Activated CD4-positive, alpha-beta memory T cell treated with anti-CD3 and anti-CD28 coated beads for 36 hours (primary cell): ENCODE measurements at regions of chr17 and their contacts with region 1.

Region 1: DNA sequence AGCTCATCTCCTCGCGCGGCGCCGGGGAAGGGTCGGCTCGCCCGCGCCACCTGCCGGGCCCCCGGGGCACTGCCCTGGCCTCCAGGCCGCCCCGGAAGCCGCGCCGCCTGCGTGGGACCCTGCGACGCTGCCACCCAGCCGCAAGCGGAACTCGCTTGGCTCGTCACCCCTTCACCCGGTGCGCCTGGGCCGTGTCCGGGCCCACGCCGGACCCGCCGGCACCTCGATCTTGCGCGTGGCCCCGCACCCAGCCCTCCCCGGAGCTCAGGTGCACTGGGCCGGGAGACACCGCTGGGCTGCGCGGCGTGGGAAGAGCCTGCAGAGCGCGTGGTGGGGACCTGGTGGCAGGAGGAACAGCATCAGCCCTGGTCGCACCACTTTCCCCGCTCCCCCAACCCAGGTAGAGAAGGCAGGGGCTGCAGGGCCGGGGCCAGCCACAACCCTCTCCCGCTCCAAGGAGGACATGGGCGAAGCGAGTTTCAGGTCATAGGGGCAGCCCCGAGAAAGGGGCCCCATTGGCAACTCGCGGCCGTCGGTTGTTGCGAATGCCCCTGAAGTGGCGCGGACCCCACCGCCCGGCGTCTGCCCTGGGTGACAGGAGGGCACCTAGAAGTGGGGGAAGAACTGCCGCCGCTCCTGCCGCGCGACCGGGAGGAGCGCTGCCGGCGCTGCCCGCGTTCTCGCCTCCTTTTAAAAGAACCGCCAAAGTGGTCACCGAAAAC is 363 bp upstream of the MIF4GD start:
- DNase-seq: peak; percentile 91
- H3K4me3 Mint-ChIP-seq: peak overlapping the region; percentile 75
- H3K27ac Mint-ChIP-seq: peak overlapping the region; percentile 63
- H3K4me1 Mint-ChIP-seq: peaks cover 31% of the 10 kb centered on the region
- H3K27me3 Mint-ChIP-seq: no peaks in the 10 kb centered on the region

Region 2: DNA sequence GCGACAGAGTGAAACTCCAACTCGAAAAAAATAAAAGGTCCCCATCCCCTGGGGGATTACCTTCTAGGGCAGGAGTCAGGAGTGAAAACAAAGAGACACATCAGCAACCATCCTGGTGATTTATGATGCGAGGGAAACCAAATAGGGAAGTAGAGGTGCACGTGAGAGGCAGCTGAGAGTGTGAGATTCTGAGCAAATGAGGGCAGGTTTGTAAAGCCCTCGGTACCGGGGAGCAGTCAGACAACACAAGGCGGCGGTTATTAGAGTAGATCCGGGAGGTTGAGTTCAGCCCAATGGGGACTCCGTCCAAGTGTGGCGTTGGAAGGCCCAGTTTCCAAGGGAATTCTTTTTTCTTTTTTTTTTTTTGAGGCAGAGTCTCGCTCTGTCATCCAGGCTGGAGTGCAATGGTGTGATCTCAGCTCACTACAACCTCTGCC is 169.0 kb before region 1 on chr17:
- CTCF ChIA-PET with region 1: no interaction called
- POLR2A ChIA-PET with region 1: no interaction called
- intact Hi-C with region 1: no loop called
- DNase-seq: no peak
- H3K4me3 Mint-ChIP-seq: no peak overlapping the region
- H3K27ac Mint-ChIP-seq: no peak overlapping the region
- H3K4me1 Mint-ChIP-seq: no peaks in the 10 kb centered on the region
- H3K27me3 Mint-ChIP-seq: no peaks in the 10 kb centered on the region

Region 3: GRCh38 chr17:75238684-75239191 is 32.7 kb before region 1 on chr17:
- CTCF ChIA-PET with region 1: interaction called, 60 read pairs
- POLR2A ChIA-PET with region 1: interaction called, 21 read pairs
- intact Hi-C with region 1: no loop called
- DNase-seq: peak; percentile 74
- H3K4me3 Mint-ChIP-seq: no peak overlapping the region
- H3K27ac Mint-ChIP-seq: peak overlapping the region; percentile 85
- H3K4me1 Mint-ChIP-seq: peaks cover 41% of the 10 kb centered on the region
- H3K27me3 Mint-ChIP-seq: no peaks in the 10 kb centered on the region

Region 4: GRCh38 chr17:75295201-75296158 is 24.1 kb after region 1 on chr17:
- CTCF ChIA-PET with region 1: interaction called, 56 read pairs
- POLR2A ChIA-PET with region 1: interaction called, 6 read pairs
- intact Hi-C with region 1: no loop called
- DNase-seq: peak; percentile 58
- H3K4me3 Mint-ChIP-seq: peak overlapping the region; percentile 37
- H3K27ac Mint-ChIP-seq: peak overlapping the region; percentile 99
- H3K4me1 Mint-ChIP-seq: peaks cover 35% of the 10 kb centered on the region
- H3K27me3 Mint-ChIP-seq: no peaks in the 10 kb centered on the region

Region 5: DNA sequence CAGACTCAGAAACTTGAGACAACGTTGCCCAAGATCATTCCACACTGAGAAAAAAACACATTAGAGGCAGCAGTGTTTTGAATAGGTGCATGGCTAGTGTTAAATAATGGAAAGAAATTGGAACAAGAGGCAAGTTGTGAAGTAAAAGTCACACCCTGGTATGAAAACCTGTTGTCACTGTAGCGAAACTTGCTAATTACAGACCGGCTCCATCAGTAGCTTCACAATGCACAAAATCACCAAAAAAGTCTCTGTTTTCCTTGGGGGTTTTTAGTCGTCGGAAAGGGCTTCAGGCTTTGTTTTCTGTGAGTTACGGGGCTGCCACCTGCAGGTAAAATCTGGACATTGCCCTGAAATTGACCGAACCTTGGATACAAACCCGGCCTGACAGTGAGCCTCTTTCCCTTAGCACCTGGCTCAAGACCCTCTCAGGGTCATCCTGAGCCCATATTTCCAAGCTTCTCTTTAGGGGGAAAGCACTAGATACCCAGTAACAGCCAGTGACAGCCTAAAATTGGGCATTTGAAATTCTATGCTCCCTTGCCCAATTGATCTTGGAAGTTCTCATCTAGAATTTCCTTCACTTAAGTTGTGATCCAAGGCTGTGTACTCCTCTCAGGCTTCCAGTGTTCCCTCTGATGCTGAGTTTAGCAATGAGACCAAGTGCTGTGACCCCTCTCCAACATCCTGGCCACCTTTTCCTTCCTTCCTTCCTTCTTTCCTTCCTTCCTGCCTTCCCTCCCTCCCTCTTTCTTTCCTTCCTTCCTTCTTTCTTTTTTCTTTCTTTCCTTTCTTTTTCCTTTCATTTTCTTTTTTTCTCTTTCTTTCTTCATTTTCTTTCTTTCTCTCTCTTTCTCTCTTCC is 141.3 kb after region 1 on chr17:
- CTCF ChIA-PET with region 1: interaction called, 41 read pairs
- POLR2A ChIA-PET with region 1: no interaction called
- intact Hi-C with region 1: no loop called
- DNase-seq: peak; percentile 86
- H3K4me3 Mint-ChIP-seq: peak overlapping the region; percentile 49
- H3K27ac Mint-ChIP-seq: peak overlapping the region; percentile 19
- H3K4me1 Mint-ChIP-seq: peaks cover 16% of the 10 kb centered on the region
- H3K27me3 Mint-ChIP-seq: peaks cover 1% of the 10 kb centered on the region